Caco-2 (cell line): ENCODE measurements at regions of chr18 and their contacts with region 1.

Region 1: DNA sequence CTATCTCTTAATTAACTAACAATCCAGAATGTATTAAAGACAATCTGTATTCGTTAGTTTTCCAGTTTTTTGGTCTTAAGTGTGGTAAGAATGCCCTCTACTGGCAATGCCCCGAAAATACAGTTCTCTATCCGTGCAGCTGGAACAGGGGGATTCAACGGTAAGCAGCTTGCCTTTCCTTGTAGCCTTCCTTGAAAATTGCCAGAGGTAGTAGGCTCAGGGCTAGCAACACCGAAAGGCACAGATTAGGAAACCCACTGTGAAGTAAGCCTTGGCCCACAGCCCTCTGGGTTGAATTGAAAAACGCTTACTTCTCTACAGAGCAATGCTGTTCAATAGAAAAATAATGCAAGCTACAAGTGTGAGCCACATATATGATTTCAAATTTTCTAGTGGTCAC is 17.1 kb upstream of the VPS4B start:
- DNase-seq: peak in 1 of 2 experiments; percentile 38
- H3K4me3 ChIP-seq: no peak overlapping the region
- H3K4me3 Mint-ChIP-seq: no peak overlapping the region
- H3K27ac Mint-ChIP-seq: no peak overlapping the region
- H3K4me1 ChIP-seq: no peaks in the 10 kb centered on the region
- H3K4me1 Mint-ChIP-seq: no peaks in the 10 kb centered on the region
- H3K27me3 ChIP-seq: no peaks in the 10 kb centered on the region
- H3K27me3 Mint-ChIP-seq: peaks cover 3% of the 10 kb centered on the region
- CTCF ChIP-seq: peak; percentile 41 to 64

Region 2: DNA sequence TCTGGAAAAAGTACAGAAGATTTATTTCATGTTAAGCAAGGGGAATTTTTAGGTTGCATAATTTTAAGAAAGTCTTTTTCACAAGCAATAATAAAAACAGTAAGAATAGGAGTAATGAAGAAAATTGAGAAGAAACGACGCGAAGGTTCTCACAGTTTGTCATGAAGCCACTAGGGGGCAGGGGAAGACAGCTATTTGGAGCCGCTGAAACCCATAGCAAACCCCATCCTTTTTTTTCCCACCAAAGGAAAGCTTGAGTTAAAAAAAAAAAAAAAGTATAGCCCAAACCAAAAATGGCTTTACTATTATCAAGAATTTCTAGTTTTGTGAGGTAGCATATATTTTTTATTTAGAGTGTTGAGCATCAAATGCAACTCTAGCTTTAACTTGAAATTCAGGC is 423.1 kb before region 1 on chr18:
- CTCF ChIA-PET with region 1: interaction called, 3 read pairs
- POLR2A ChIA-PET with region 1: no interaction called
- intact Hi-C with region 1: loop called (anchors 1 kb)
- DNase-seq: peak in 1 of 2 experiments; percentile 40
- H3K4me3 ChIP-seq: no peak overlapping the region
- H3K4me3 Mint-ChIP-seq: no peak overlapping the region
- H3K27ac Mint-ChIP-seq: no peak overlapping the region
- H3K4me1 ChIP-seq: no peaks in the 10 kb centered on the region
- H3K4me1 Mint-ChIP-seq: no peaks in the 10 kb centered on the region
- H3K27me3 ChIP-seq: no peaks in the 10 kb centered on the region
- H3K27me3 Mint-ChIP-seq: no peaks in the 10 kb centered on the region
- CTCF ChIP-seq: peak; percentile 40 to 60

Region 3: GRCh38 chr18:63339920-63340484 is 99.3 kb before region 1 on chr18:
- CTCF ChIA-PET with region 1: no interaction called
- POLR2A ChIA-PET with region 1: no interaction called
- intact Hi-C with region 1: loop called (anchors 1 kb)
- DNase-seq: no peak
- H3K4me3 ChIP-seq: no peak overlapping the region
- H3K4me3 Mint-ChIP-seq: no peak overlapping the region
- H3K27ac Mint-ChIP-seq: no peak overlapping the region
- H3K4me1 ChIP-seq: 0 out of 2 replicates have a peak, but pooled peaks cover 4% of the 10 kb centered on the region
- H3K4me1 Mint-ChIP-seq: no peaks in the 10 kb centered on the region
- H3K27me3 ChIP-seq: no peaks in the 10 kb centered on the region
- H3K27me3 Mint-ChIP-seq: no peaks in the 10 kb centered on the region
- CTCF ChIP-seq: peak; percentile 13 to 25

Region 4: DNA sequence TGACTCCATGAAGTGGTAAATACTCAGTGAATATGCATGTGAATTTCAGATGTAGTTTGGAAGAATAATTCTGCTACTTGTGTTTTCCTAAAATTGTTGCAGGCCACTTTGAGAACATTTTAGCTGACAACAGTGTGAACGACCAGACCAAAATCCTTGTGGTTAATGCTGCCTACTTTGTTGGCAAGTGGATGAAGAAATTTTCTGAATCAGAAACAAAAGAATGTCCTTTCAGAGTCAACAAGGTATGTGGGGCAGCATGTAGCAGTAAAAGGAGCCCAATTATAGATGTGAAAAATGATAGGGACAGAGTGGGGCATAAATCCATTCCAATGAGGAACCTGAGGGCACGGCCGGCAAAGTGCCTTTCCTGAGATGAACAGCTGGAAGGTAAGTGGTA is 53.5 kb after region 1 on chr18:
- CTCF ChIA-PET with region 1: no interaction called
- POLR2A ChIA-PET with region 1: interaction called, 11 read pairs
- intact Hi-C with region 1: no loop called
- DNase-seq: no peak
- H3K4me3 ChIP-seq: no peak overlapping the region
- H3K4me3 Mint-ChIP-seq: no peak overlapping the region
- H3K27ac Mint-ChIP-seq: no peak overlapping the region
- H3K4me1 ChIP-seq: no peaks in the 10 kb centered on the region
- H3K4me1 Mint-ChIP-seq: no peaks in the 10 kb centered on the region
- H3K27me3 ChIP-seq: no peaks in the 10 kb centered on the region
- H3K27me3 Mint-ChIP-seq: no peaks in the 10 kb centered on the region
- CTCF ChIP-seq: no peak